Activated CD4-positive, alpha-beta memory T cell treated with anti-CD3 and anti-CD28 coated beads, Interleukin-2, amount 10 ng/mL, durations not matched to agents 7 days and 5 days (primary cell): ENCODE measurements at regions of chr7 and their contacts with region 1.

Region 1: GRCh38 chr7:91835846-91836368 is 44.6 kb downstream of the MTERF1 start:
- DNase-seq: no peak
- H3K4me3 Mint-ChIP-seq: no peak overlapping the region
- H3K27ac Mint-ChIP-seq: no peak overlapping the region
- H3K4me1 Mint-ChIP-seq: no peaks in the 10 kb centered on the region
- H3K27me3 Mint-ChIP-seq: no peaks in the 10 kb centered on the region

Region 2: GRCh38 chr7:91852263-91852741 is 16.4 kb after region 1 on chr7:
- CTCF ChIA-PET with region 1: interaction called, 10 read pairs
- POLR2A ChIA-PET with region 1: no interaction called
- DNase-seq: no peak
- H3K4me3 Mint-ChIP-seq: no peak overlapping the region
- H3K27ac Mint-ChIP-seq: no peak overlapping the region
- H3K4me1 Mint-ChIP-seq: no peaks in the 10 kb centered on the region
- H3K27me3 Mint-ChIP-seq: no peaks in the 10 kb centered on the region